HepG2 (cell line): ENCODE measurements at regions of chr6 and their contacts with region 1.

Region 1: GRCh38 chr6:168132531-168133167 is 53.6 kb upstream of the FRMD1 start:
- DNase-seq: peak; percentile 53
- ATAC-seq: peak; percentile 86
- H3K4me3 ChIP-seq: no peak overlapping the region
- H3K27ac ChIP-seq: no peak overlapping the region
- H3K4me1 ChIP-seq: no peaks in the 10 kb centered on the region
- H3K27me3 ChIP-seq: peaks cover 6 to 54% of the 10 kb centered on the region in 2 experiments; a peak in 4 of 5 replicates
- CTCF ChIP-seq: peak; percentile 87
- EP300 ChIP-seq: no peak
- POLR2A ChIP-seq: no peak
- RAD21 ChIP-seq: peak; percentile 86

Region 2: GRCh38 chr6:167706313-167707109 is 426.1 kb before region 1 on chr6:
- CTCF ChIA-PET with region 1: no interaction called
- POLR2A ChIA-PET with region 1: no interaction called
- in situ Hi-C with region 1: no loop called
- intact Hi-C with region 1: no loop called
- DNase-seq: no peak
- ATAC-seq: no peak
- H3K4me3 ChIP-seq: no peak overlapping the region
- H3K27ac ChIP-seq: no peak overlapping the region
- H3K4me1 ChIP-seq: peaks cover 44% of the 10 kb centered on the region
- H3K27me3 ChIP-seq: no peaks in the 10 kb centered on the region; a peak in 1 of 5 replicates
- CTCF ChIP-seq: no peak
- EP300 ChIP-seq: no peak
- POLR2A ChIP-seq: no peak
- RAD21 ChIP-seq: no peak

Region 3: DNA sequence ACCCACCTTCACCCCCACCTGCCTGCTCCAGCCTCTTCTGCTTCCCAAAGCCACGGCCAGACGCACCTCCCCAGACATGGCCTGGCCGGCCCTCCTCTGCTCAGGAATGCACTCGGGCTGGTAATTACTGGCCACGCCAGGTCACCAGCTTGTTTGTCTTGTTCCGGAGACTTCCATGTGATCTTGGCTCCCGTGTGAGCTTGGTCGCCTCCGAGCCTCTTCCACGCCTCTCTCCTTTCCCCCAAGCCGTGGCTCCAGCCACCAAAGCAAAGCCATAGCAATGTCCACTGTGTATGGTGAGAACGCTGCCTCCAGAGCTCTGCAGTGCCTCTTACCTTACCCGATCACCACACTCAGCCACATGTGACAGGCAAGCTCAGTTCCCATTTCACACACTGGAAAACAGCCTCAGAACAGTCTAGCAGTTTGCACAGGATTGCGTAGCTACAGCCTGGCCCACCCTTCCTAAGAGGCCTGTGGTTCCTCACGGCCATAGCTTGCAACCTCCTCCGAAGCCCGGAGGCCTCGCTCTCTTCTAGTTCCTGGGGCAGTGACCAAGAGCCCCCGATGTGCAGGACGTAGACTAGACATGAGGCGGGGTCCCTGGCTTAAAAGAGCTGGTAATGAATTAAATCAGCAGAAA is 354.0 kb before region 1 on chr6:
- CTCF ChIA-PET with region 1: no interaction called
- POLR2A ChIA-PET with region 1: no interaction called
- in situ Hi-C with region 1: no loop called
- intact Hi-C with region 1: no loop called
- DNase-seq: no peak
- ATAC-seq: peak; percentile 43
- H3K4me3 ChIP-seq: peak overlapping the region in 1 of 3 experiments; percentile 32; a peak in 1 of 6 replicates
- H3K27ac ChIP-seq: no peak overlapping the region
- H3K4me1 ChIP-seq: peaks cover 48% of the 10 kb centered on the region
- H3K27me3 ChIP-seq: no peaks in the 10 kb centered on the region; a peak in 1 of 5 replicates
- CTCF ChIP-seq: no peak
- EP300 ChIP-seq: no peak
- POLR2A ChIP-seq: no peak
- RAD21 ChIP-seq: no peak

Region 4: GRCh38 chr6:167907837-167908681 is 224.6 kb before region 1 on chr6:
- CTCF ChIA-PET with region 1: interaction called, 6 read pairs
- POLR2A ChIA-PET with region 1: no interaction called
- in situ Hi-C with region 1: no loop called
- intact Hi-C with region 1: loop called (anchors 2 kb)
- DNase-seq: peak; percentile 51
- ATAC-seq: peak; percentile 86
- H3K4me3 ChIP-seq: no peak overlapping the region
- H3K27ac ChIP-seq: no peak overlapping the region
- H3K4me1 ChIP-seq: peaks cover 3% of the 10 kb centered on the region; the same call in 1 of the 2 replicates
- H3K27me3 ChIP-seq: no peaks in the 10 kb centered on the region
- CTCF ChIP-seq: peak; percentile 69
- EP300 ChIP-seq: no peak
- POLR2A ChIP-seq: no peak
- RAD21 ChIP-seq: 0 out of 2 replicates have a peak, but pooled peaks have one; percentile 28

Region 5: DNA sequence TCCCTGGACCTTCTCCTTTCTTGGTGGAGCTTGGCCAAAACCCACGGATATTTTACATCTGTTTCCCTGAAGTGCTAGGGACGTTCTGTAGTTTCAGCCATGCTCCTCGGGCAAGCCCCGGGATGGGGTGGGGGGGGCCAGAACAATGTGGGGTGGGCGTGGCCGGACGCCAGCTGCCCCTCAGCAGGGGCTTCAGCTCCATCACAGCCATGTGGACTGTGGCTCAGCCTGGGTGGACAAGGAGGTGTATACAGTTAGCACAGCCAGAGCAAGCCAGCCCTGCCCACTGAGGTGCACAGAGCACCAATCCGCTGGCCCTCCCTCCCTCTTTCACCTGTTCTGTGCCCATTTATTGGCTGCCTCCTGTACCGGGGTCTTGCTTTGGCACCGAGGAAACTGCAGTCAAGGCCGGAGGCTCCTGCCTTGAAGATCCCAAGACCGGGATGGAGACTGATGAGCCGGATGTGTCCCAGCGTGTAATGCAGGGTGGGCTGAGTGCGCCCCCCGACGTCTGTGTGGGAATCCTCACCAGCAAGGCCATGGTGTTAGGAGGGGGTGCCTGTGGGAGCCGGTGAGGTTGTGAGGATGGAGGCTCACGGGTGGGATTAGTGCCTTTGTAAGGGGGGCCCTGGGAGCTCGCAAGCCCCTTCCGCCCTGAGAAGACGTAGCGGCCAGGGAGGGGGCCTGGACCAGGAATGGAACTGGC is 81.6 kb before region 1 on chr6:
- CTCF ChIA-PET with region 1: no interaction called
- POLR2A ChIA-PET with region 1: no interaction called
- in situ Hi-C with region 1: loop called (anchors 10 kb)
- intact Hi-C with region 1: no loop called
- DNase-seq: no peak
- ATAC-seq: peak; percentile 16; the same call in 2 of the 3 replicates
- H3K4me3 ChIP-seq: no peak overlapping the region
- H3K27ac ChIP-seq: no peak overlapping the region
- H3K4me1 ChIP-seq: no peaks in the 10 kb centered on the region
- H3K27me3 ChIP-seq: peaks cover 19 to 75% of the 10 kb centered on the region in 2 experiments
- CTCF ChIP-seq: peak; percentile 74
- EP300 ChIP-seq: no peak
- POLR2A ChIP-seq: no peak
- RAD21 ChIP-seq: no peak

Region 6: GRCh38 chr6:168060521-168060931 is 72.1 kb before region 1 on chr6:
- CTCF ChIA-PET with region 1: interaction called, 18 read pairs
- POLR2A ChIA-PET with region 1: no interaction called
- in situ Hi-C with region 1: loop called (anchors 10 kb)
- intact Hi-C with region 1: loop called (anchors 1 kb)
- DNase-seq: peak; percentile 64
- ATAC-seq: peak; percentile 80
- H3K4me3 ChIP-seq: peak overlapping the region in 1 of 3 experiments; percentile 23; a peak in 1 of 6 replicates
- H3K27ac ChIP-seq: no peak overlapping the region
- H3K4me1 ChIP-seq: peaks cover 5% of the 10 kb centered on the region
- H3K27me3 ChIP-seq: peaks cover 13 to 41% of the 10 kb centered on the region in 2 experiments; a peak in 4 of 5 replicates
- CTCF ChIP-seq: peak; percentile 99
- EP300 ChIP-seq: no peak; a peak in 1 of 4 replicates
- POLR2A ChIP-seq: no peak
- RAD21 ChIP-seq: peak; percentile 95

Region 7: DNA sequence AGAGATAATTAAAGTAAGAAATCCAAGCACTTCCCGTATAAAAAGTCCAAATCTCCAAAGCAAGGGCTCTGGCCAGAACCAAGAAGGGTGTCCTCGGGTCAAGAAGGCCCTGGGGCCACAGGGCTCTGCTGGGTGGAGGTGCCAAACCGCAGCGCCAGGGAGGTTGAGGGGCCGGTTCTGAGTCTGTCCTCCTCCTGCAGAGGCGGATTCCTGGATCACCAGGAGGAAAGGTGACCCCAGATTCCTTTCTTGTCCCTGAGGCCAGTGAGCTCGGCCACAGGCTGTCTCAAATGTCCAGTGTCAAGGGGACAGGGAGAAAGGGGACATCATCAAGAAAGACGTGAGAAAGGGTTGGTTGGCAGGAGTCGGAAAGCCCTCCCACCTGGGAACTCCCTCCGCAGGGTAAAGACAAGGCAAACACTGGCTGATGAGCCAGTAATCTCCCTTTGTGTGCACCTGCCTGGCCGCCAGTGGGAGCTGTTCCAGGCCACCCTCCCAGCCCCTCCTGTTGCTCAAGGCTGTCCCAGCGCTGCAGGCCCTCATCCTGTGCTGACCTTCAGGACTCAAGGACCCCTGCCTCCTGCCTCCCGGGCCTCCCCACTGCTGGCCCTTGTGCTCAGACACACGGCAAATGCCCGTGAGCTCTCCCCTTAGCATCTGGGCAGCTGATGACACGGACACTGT is 61.2 kb before region 1 on chr6:
- CTCF ChIA-PET with region 1: no interaction called
- POLR2A ChIA-PET with region 1: no interaction called
- in situ Hi-C with region 1: no loop called
- intact Hi-C with region 1: loop called (anchors 1 kb)
- DNase-seq: peak; percentile 35
- ATAC-seq: peak; percentile 92
- H3K4me3 ChIP-seq: no peak overlapping the region
- H3K27ac ChIP-seq: no peak overlapping the region
- H3K4me1 ChIP-seq: no peaks in the 10 kb centered on the region
- H3K27me3 ChIP-seq: peaks cover 9 to 53% of the 10 kb centered on the region in 2 experiments; a peak in 4 of 5 replicates
- CTCF ChIP-seq: peak; percentile 83
- EP300 ChIP-seq: no peak
- POLR2A ChIP-seq: no peak
- RAD21 ChIP-seq: peak; percentile 66

Region 8: DNA sequence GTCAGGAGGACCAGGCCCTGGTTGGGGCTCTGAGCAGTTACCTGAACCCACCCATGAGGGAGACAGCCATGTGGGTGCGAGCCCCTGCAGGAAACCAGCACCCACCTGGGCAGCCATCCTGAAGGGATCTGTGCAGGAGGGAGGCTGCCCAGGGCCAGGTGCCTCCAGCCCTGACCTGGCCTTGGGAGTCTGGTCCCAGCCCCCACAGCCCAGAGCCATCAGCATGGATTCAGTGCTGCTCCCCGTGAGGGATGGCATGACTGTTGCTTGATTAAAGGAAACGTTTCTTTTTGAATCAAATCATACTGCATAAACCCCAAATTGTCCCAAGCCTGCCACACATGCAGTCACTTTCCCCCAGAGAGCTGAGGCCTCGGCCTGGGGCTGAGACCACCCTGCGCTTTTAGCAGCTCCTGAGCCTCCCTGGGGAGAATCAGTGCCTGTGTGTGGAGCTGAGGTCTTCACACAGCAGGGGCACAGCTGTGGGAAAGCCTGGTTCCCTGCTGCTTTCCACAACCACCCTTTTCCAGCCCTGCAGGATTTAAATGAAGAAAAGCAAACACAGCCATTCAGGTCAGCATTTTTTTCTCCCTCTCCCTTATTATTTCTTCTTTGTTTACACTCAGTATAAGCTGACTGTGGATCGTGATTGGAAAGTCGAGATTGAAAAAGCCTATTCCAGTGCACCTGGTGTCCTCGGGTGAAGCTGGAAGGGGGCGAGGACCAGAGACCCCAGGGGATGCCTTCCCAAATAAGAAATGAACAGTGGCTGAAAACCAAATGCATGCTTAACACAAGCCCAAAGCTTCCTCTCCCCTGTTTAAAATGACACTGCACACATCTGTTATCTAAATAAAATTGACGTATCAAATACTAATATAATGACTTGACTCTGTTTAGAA is 592.3 kb after region 1 on chr6:
- CTCF ChIA-PET with region 1: no interaction called
- POLR2A ChIA-PET with region 1: no interaction called
- in situ Hi-C with region 1: no loop called
- intact Hi-C with region 1: no loop called
- DNase-seq: no peak
- ATAC-seq: no peak
- H3K4me3 ChIP-seq: no peak overlapping the region
- H3K27ac ChIP-seq: no peak overlapping the region
- H3K4me1 ChIP-seq: no peaks in the 10 kb centered on the region
- H3K27me3 ChIP-seq: peaks cover 0 to 36% of the 10 kb centered on the region in 2 experiments; a peak in 3 of 5 replicates
- CTCF ChIP-seq: no peak
- EP300 ChIP-seq: no peak
- POLR2A ChIP-seq: no peak
- RAD21 ChIP-seq: no peak